Heart left ventricle (tissue), 16 donors: ENCODE measurements at regions of chr1 and their contacts with region 1.

Region 1: GRCh38 chr1:162215902-162216301 is 146.4 kb downstream of the NOS1AP start:
- DNase-seq: no peak
- ATAC-seq: no peak
- H3K4me3 ChIP-seq: no peak overlapping the region
- H3K27ac ChIP-seq: no peak overlapping the region
- H3K4me1 ChIP-seq: peaks cover 0 to 45% (median 17%) of the 10 kb centered on the region in 12 donors
- H3K27me3 ChIP-seq: no peaks in the 10 kb centered on the region
- CTCF ChIP-seq: no peak
- POLR2A ChIP-seq: no peak

Region 2: DNA sequence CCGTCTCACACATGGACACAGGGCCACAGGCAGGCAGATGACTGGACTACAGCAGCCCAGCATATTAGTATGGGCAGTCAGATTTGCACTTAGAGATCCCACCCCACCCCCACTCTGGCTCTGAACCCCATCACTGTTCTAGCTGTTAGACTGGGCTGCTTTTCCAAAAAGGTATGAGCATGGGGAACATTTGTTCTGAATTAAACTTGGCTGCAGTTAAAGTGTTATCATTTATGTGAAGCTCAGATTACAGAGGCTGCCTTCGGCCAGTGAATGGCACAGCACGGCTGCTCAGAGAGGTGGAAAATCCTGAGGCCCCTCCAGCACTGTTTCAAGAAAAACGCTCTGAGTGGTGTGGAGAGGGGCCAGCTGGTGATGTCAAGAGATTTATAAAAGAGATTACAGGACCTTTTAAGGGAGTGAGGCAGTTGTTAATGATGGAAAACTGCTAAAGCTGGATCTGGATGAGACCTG is 153.3 kb before region 1 on chr1:
- intact Hi-C with region 1: loop called in 1 of 10 experiments (anchors 5 kb)
- DNase-seq: peak in 4 of 5 donors; percentile 9 to 58 (median 42)
- ATAC-seq: peak; percentile 81 to 90 (median 83)
- H3K4me3 ChIP-seq: no peak overlapping the region
- H3K27ac ChIP-seq: peak overlapping the region in 7 of 12 donors; percentile 12 to 68 (median 48)
- H3K4me1 ChIP-seq: peaks cover 0 to 17% (median 1%) of the 10 kb centered on the region in 12 donors
- H3K27me3 ChIP-seq: peaks cover 0 to 17% (median 0%) of the 10 kb centered on the region in 9 donors
- CTCF ChIP-seq: no peak
- POLR2A ChIP-seq: no peak

Region 3: GRCh38 chr1:162357681-162358266 is 141.9 kb after region 1 on chr1:
- intact Hi-C with region 1: no loop called
- DNase-seq: no peak
- ATAC-seq: no peak
- H3K4me3 ChIP-seq: no peak overlapping the region
- H3K27ac ChIP-seq: no peak overlapping the region
- H3K4me1 ChIP-seq: peaks cover 0 to 8% (median 0%) of the 10 kb centered on the region in 12 donors
- H3K27me3 ChIP-seq: no peaks in the 10 kb centered on the region
- CTCF ChIP-seq: peak in 9 of 12 donors; percentile 6 to 49 (median 23)
- POLR2A ChIP-seq: no peak

Region 4: DNA sequence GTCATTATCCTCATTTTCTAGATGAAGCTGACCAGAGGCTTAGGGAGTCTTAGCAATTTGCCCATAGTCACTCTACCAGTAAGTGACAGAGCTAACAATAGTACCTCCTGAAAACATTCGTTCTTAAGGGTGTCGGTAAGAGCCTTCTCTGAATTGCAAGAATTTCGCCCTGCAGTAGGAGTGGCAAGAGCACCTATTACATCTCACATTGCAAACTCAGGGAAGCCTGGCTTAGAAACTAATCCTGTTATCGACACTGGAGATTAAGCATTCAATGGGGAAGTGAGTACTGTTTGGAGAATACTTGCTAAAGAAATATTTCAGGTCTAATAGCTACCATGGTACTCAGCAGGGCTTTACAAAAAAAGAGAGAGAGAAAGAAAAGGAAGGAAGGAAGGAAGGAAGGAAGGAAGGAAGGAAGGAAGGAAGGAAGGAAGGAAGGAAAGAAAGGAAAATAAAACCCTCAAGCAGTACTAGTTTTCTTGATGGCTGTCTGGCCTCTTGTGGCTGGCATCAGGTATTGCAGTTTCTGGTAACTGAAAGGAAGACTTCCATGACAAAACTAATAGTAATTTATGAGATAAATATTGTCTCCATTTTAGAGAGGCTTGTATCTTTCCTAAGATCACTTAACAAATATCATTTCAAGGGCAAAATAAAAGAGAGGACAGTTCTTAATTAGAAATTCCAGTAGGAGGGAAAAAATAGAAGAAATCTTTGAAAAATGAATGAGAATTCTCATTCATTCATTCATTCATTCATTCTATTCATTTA is 176.1 kb after region 1 on chr1:
- intact Hi-C with region 1: no loop called
- DNase-seq: no peak
- ATAC-seq: peak in 1 of 4 donors; percentile 60
- H3K4me3 ChIP-seq: no peak overlapping the region
- H3K27ac ChIP-seq: no peak overlapping the region
- H3K4me1 ChIP-seq: peaks cover 0 to 4% (median 0%) of the 10 kb centered on the region in 12 donors
- H3K27me3 ChIP-seq: peaks cover 0 to 21% (median 0%) of the 10 kb centered on the region in 9 donors
- CTCF ChIP-seq: peak; percentile 67 to 87 (median 78)
- POLR2A ChIP-seq: no peak